ENCODE measurements at regions of chr22 and their contacts with region 1.

Region 1: DNA sequence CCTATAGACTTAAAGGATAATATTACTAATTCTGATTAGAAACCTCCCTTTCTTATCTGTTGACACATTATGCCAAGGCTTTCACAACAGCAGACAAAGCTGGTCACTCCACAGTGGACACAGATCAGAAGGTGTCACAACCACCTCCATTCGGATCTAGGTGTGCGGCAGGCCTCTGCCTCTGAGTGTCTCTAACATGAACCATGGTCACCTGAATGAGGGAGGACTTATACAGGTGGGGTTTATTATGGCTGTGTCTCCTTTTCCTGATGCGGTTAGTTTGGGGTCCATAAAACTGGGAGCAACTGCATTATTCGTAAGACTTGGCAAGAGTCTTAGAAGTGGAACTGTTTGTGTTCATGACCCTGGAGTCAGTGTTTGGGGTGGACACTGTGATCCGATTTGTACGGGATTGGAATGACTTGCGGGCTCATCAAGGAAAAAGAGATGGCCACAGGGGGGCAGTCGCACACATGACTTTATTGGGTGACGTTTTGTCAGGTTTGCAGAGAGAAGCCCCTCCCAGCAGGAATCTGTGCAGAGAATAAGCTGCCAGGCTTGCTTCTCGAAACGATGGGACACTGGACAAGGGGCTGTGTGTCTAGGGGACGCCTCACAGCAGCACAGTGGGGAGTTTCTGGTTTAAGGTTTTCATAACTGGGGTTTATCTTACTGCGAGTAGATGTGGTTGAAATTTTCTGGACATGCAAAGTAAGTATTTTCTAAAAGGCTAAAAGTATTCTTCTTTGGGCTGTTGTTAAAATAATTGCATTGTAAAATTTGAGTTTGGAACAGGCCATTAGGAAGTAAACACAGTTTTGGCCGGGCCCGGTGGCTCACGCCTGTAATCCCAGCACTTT is 90.6 kb downstream of the GAB4 start:
- DNase-seq: peak in 3 of 4 donors; percentile 3 to 40 (median 37)
- ATAC-seq: peak; percentile 85
- H3K4me3 ChIP-seq: no peak overlapping the region
- H3K27ac ChIP-seq: no peak overlapping the region
- H3K4me1 ChIP-seq: no peaks in the 10 kb centered on the region
- H3K27me3 ChIP-seq: peaks cover 0 to 46% of the 10 kb centered on the region in 2 donors
- CTCF ChIP-seq: peak; percentile 52 to 55

Region 2: DNA sequence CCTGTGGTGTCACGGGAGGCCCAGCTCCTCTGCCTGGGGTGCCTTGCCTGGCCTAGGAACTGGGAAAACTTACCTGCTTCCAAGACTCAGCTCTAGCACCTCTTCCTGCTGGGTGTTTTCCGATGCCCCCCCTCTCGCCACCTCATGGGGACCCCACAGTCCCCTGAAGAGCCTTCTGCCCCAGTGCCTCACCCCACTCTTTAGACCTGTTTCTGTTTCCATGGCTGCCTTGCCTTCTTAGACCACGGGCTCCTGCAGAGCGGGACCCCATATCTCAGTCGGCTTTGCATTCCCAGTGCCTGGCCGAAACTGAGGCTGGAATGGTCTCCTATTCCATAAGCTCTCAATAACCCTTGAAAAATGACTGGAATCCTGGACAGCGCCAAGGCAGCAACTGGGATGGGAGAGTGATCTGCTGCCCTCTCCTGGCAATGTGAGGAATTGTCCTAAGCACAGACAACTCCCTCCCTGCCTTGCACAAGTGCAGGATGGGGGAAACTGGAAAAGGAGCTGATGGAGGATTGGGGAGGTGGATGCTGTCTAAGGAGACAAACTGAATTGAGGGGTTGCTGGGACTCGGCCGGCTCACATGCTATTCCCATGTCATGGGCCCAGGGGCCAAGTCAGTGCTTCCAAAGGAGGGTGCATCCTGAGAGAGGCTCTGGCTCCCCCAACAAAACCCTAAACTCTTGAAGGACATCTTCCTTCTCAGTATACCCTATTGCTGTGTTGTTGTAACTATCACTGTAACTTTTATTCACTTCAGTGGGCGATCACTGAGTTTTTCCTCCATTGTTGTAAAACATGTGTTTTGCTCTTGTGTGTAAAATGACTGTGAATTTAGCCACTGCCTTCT is 140.8 kb after region 1 on chr22:
- intact Hi-C with region 1: loop called in 1 of 2 experiments (anchors 5 kb)
- DNase-seq: peak in 3 of 4 donors; percentile 28 to 73 (median 53)
- ATAC-seq: peak; percentile 97
- H3K4me3 ChIP-seq: no peak overlapping the region
- H3K27ac ChIP-seq: no peak overlapping the region
- H3K4me1 ChIP-seq: peaks cover 0 to 10% of the 10 kb centered on the region in 2 donors
- H3K27me3 ChIP-seq: no peaks in the 10 kb centered on the region
- CTCF ChIP-seq: peak; percentile 91

Measured in left lung (tissue), 14 donors.